Kidney (tissue), 22 donors: ENCODE measurements at regions of chr11 and their contacts with region 1.

Region 1: GRCh38 chr11:125164422-125165110 is at the start of gene PKNOX2:
- DNase-seq: peak; percentile 88 to 94 (median 92)
- H3K4me3 ChIP-seq: peak within 1 kb of the TSS; percentile 63 to 68 (median 63)
- H3K27ac ChIP-seq: peak within 1 kb of the TSS; percentile 69 to 83
- H3K4me1 ChIP-seq: peaks cover 0 to 14% (median 13%) of the 10 kb centered on the region in 3 donors
- H3K27me3 ChIP-seq: no peaks in the 10 kb centered on the region
- CTCF ChIP-seq: peak; percentile 61
- total RNA-seq, gene PKNOX2: 6.0 TPM

Region 2: DNA sequence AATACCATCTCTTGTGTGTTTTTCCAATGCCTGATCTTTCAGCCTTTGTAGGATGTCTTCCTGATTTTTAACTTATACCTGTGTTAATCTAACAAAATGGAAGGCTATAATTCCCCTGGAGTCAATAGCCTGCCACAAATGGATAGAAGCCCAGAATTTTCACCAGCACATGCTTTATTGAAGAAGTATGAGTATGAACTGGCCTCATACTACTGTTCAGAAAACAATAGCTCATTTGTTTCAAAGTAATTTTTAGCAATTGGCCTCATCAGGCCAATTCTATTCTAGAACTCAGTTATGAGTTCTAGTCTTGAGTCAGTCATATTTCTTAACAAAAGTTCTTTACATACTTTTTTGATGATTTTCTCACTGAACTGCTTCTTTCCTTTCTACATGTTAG is 142.0 kb before region 1 on chr11:
- intact Hi-C with region 1: no loop called
- DNase-seq: no peak
- H3K4me3 ChIP-seq: no peak overlapping the region
- H3K27ac ChIP-seq: no peak overlapping the region
- H3K4me1 ChIP-seq: no peaks in the 10 kb centered on the region
- H3K27me3 ChIP-seq: no peaks in the 10 kb centered on the region
- CTCF ChIP-seq: no peak

Region 3: DNA sequence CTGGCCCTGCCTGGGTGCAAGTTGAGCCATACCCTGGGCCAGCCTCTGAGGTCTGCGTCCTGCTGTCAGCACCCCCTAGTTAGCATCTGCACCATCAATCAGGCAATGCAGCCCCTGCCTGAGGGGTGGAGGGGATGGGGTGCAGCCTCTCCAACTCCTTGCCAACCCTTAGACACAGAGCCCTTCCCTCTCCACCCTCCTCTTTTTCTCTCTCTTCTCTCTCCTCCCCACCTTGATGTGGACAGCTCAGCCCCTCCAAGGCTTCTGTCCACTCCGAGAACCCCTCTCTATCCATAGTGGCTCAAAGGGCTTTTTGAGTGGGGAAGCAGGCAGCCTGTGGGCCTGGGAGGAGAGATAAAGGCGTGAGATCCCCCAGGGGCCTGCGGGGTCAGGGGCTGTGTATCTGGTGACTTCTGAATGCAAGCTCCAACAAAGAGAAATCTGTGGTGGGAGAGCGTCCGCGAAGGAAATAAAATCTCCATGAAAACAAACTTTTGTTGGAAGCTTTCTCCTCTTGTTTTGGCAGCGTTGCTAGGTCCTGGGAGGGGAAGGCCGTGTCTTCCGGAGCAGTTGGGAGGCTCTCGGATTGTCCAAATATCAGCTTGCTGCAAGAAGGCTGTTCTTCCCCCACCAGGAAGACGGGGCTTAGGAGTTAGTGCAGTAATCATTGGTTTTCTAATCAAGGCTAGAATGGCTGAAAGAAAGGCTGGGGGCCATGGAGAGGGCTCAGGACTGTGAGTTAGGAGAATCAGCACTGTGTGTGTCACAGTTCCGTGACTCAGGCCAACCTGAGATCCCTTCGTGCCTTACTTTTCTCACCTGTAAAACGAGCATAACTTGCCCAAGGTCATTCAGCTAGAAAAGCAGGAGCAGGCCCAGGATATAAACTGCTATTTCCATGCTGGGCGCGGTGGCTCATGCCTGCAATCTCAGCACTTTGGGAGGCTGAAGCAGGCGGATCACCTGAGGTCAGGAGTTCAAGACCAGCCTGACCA is 50.3 kb after region 1 on chr11:
- intact Hi-C with region 1: loop called (anchors 10 kb)
- DNase-seq: peak; percentile 49 to 94 (median 74)
- H3K4me3 ChIP-seq: no peak overlapping the region
- H3K27ac ChIP-seq: no peak overlapping the region
- H3K4me1 ChIP-seq: peaks cover 0 to 5% (median 2%) of the 10 kb centered on the region in 3 donors
- H3K27me3 ChIP-seq: no peaks in the 10 kb centered on the region
- CTCF ChIP-seq: no peak

Region 4: GRCh38 chr11:125345421-125346178 is 181.0 kb after region 1 on chr11:
- intact Hi-C with region 1: loop called (anchors 5 kb)
- DNase-seq: peak; percentile 85 to 93 (median 86)
- H3K4me3 ChIP-seq: no peak overlapping the region
- H3K27ac ChIP-seq: no peak overlapping the region
- H3K4me1 ChIP-seq: peaks cover 0 to 8% (median 2%) of the 10 kb centered on the region in 3 donors
- H3K27me3 ChIP-seq: no peaks in the 10 kb centered on the region
- CTCF ChIP-seq: peak; percentile 94